Lower leg skin (tissue), 4 donors: ENCODE measurements at regions of chr20 and their contacts with region 1.

Region 1: DNA sequence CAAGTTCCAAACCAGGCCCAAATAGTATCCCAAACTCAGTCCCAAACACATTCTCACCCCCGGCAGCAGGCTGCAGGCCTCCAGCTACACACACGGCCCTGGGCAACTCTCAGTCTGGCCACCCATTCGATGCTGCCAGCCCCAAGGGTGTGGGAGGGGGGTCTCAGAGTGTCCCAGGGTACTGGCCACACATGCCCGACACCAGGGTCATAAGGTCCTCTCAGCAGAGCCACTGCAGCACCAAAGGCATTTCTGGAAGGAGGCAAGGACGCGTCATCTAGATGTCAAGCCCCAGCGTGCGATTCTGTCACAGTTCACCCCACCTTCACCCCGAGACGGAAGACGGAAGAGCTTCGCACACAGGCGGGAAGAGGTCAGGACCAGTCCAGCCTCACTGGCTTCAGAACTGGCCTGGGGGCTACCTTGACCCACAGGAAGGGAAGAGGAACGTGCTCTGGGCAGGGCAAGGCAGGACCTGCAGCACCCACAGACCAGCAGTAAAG is 9.5 kb downstream of the MYL9 start:
- DNase-seq: no peak
- H3K4me3 ChIP-seq: no peak overlapping the region
- CTCF ChIP-seq: no peak
- POLR2A ChIP-seq: no peak

Region 2: DNA sequence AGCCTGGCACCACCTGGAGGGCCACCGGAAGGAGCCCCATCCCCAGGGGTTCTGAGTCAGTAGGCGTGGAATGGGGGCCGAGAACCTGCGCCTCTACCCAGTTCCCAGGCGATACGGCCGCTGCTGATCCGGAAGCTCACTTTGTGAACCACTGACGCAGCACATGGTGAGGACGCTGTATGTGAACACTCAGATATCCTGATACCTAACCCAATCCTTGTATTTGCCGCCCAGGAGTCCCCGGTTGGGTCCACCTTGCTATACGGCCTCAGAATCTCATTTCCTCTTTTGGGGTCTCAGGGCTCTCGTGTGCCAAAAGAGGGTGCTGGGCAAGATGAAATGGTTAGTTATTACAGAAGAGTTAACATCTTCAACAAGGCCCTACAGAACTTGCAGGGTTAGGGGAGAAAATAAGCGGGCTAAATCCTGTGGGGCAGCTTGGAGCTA is 54.1 kb after region 1 on chr20:
- intact Hi-C with region 1: loop called (anchors 5 kb)
- DNase-seq: peak; percentile 41 to 89
- H3K4me3 ChIP-seq: no peak overlapping the region
- CTCF ChIP-seq: no peak
- POLR2A ChIP-seq: no peak

Region 3: DNA sequence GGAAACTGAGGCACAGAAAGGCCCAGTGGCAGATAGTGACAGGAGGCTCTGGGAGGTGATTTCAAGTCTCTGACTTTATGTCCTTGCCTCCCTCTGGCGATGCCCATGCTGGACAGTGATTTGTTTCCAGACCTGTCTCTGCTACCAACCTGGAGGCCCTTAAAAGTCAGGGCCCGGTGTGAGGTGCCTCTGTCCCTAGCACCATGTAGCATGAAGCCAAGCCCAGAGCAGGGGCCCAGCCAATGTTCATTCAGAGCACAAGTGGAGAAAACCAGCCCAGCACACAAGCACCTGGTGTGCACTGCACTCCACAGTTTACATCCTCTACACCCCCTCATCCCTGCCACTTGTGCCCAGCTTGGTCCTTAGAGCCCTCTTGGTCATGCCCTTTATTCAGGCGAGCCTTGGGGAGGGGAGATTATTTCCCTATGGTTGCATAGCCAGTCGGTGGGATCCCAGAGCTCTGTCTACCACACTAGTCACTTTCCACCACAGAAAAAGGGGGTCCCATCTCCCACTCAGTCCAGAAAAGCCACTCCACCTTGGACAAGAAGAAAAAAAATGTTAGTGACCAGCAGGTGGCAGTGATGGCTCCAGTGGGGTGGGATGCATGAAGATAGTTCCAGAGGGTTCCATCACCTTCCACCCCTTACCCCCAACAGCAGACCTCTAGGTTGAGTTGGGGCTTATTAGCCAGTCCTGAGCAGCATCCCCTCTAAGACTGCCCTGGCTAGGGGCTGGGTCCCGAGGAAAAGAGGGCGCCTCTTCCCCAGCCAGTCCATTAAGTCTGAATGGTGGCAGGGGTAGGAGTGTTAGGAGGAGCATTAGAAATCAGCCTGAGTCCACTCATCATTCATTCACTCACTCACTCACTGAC is 1678.8 kb after region 1 on chr20:
- intact Hi-C with region 1: no loop called
- DNase-seq: no peak
- H3K4me3 ChIP-seq: no peak overlapping the region
- CTCF ChIP-seq: no peak
- POLR2A ChIP-seq: no peak